ENCODE measurements at regions of chr1 and their contacts with region 1.

Region 1: DNA sequence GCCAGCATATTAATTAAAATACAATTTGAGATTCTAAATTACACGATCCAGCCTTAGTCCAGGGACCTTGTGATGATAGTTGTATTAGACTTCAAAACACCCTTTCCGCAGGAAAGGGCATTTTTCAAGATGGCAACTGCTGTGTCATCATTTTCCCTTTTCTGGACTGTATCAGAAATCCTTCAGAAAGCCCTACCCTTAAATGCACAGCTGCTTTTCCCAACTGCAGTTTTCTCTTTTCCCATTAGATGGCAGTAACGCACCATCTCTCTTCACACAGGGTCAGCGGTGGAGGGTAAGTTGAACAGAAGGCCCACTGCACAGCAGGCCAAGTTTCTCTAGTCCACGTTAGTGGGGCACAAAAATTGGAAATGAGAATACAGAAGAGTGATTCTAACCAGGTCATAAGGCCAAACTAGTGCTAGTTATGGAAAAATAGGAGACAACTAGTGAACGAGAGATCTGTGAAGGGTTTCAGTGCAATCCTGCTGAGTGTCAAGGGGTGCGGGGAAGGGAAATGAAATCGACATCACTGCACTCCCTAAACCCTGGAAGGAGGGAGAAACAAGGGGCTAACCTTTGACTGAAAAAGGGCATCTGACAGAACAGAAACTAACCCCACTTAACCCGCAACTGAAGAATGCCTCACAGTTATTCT is 22.1 kb upstream of the TDRD10 start:
- DNase-seq: peak; percentile 66
- H3K4me3 Mint-ChIP-seq: no peak overlapping the region
- H3K27ac Mint-ChIP-seq: no peak overlapping the region
- H3K4me1 Mint-ChIP-seq: peaks cover 17% of the 10 kb centered on the region
- H3K27me3 Mint-ChIP-seq: peaks cover 23% of the 10 kb centered on the region

Region 2: DNA sequence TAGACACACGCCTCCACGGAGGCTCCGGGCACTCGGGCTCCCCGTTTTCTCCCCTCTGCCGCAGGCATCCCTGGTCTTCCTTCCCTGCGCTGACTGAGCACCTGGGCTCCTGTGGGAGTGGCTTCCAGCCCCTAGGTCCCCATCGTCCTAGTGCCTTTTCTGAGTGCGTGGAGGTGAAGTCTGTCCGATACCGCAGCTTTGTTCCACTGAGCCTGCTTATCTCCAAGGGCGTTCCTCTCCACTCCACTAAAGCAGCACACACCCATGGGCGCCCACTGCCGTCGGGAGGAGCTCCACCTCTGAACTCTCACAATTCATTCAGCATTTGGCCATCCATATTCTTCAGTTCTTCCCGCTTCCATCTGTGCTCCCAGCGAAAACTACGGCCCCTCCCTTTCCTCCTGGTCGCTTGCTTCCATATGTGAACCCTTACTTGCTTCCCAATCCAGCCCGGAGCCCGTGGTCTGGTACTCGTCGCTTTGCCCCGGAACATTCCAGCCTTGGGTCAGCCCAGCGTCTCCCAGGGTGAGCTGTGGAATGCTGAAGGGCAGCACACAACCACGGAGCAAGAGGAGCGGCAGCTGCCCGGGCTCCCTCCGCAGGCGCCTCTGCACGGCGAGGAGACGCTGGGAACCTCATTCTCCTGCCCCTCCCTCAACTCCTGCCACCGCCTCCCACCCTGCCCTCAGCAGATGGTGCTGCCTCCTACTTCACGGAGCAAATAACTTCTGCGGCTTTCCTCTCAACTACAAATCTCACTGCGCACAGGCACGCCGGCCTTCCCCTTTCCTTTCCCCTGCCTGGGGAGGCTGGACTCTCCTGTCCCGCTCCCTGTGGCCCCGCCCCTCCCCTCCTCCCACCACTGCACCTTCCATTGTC is 127.1 kb before region 1 on chr1:
- CTCF ChIA-PET with region 1: interaction called, 13 read pairs
- DNase-seq: peak; percentile 70
- H3K4me3 Mint-ChIP-seq: peak overlapping the region; percentile 60
- H3K27ac Mint-ChIP-seq: peak overlapping the region; percentile 83
- H3K4me1 Mint-ChIP-seq: peaks cover 42% of the 10 kb centered on the region
- H3K27me3 Mint-ChIP-seq: peaks cover 17% of the 10 kb centered on the region

Region 3: DNA sequence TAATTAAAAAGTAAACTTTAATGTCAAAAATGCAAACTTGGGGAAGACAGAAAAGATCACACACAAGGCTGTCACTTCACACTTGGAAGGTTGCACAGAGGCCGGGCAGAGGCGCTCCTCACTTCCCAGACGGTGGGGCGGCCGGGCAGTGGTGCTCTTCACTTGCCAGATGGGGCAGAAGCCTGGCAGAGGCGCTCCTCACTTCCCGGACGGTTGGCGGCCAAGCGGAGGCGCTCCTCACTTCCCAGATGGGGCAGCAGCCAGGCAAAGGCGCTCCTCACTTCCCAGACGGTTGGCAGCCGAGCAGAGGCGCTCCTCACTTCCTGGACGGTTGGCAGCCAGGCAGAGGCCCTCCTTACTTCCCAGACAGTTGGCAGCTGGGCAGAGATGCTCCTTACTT is 100.6 kb before region 1 on chr1:
- CTCF ChIA-PET with region 1: no interaction called
- DNase-seq: no peak
- H3K4me3 Mint-ChIP-seq: no peak overlapping the region
- H3K27ac Mint-ChIP-seq: no peak overlapping the region
- H3K4me1 Mint-ChIP-seq: peaks cover 5% of the 10 kb centered on the region
- H3K27me3 Mint-ChIP-seq: peaks cover 9% of the 10 kb centered on the region

Region 4: DNA sequence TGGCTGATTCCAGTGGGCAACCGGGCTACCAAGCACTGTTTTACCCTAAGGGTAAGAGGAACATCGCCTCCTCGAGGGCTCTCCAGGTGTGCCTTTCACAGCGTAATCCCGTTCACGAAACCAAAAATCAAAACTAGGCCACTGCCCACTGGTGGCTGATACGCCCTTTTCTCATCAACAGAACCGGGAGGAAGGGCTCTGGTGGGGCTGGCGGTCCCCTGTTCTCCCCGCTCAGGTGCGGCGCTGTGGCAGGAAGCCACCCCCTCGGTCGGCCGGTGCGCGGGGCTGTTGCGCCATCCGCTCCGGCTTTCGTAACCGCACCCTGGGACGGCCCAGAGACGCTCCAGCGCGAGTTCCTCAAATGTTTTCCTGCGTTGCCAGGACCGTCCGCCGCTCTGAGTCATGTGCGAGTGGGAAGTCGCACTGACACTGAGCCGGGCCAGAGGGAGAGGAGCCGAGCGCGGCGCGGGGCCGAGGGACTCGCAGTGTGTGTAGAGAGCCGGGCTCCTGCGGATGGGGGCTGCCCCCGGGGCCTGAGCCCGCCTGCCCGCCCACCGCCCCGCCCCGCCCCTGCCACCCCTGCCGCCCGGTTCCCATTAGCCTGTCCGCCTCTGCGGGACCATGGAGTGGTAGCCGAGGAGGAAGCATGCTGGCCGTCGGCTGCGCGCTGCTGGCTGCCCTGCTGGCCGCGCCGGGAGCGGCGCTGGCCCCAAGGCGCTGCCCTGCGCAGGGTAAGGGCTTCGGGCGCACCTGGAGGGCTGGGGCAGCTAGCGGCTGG is 74.7 kb before region 1 on chr1 and contains the start of gene IL6R:
- CTCF ChIA-PET with region 1: interaction called, 14 read pairs
- DNase-seq: peak; percentile 81
- H3K4me3 Mint-ChIP-seq: peak within 1 kb of the TSS; percentile 84
- H3K27ac Mint-ChIP-seq: peak within 1 kb of the TSS; percentile 88
- H3K4me1 Mint-ChIP-seq: peaks cover 91% of the 10 kb centered on the region
- H3K27me3 Mint-ChIP-seq: peaks cover 18% of the 10 kb centered on the region

Region 5: GRCh38 chr1:154520333-154520732 is 40.4 kb after region 1 on chr1:
- CTCF ChIA-PET with region 1: interaction called, 10 read pairs
- DNase-seq: no peak
- H3K4me3 Mint-ChIP-seq: no peak overlapping the region
- H3K27ac Mint-ChIP-seq: no peak overlapping the region
- H3K4me1 Mint-ChIP-seq: no peaks in the 10 kb centered on the region
- H3K27me3 Mint-ChIP-seq: peaks cover 59% of the 10 kb centered on the region

Region 6: GRCh38 chr1:154546264-154547063 is 66.6 kb after region 1 on chr1:
- CTCF ChIA-PET with region 1: interaction called, 128 read pairs
- DNase-seq: peak; percentile 73
- H3K4me3 Mint-ChIP-seq: no peak overlapping the region
- H3K27ac Mint-ChIP-seq: no peak overlapping the region
- H3K4me1 Mint-ChIP-seq: peaks cover 15% of the 10 kb centered on the region
- H3K27me3 Mint-ChIP-seq: peaks cover 19% of the 10 kb centered on the region

Region 7: GRCh38 chr1:154689070-154689469 is 209.2 kb after region 1 on chr1:
- CTCF ChIA-PET with region 1: no interaction called
- DNase-seq: no peak
- H3K4me3 Mint-ChIP-seq: no peak overlapping the region
- H3K27ac Mint-ChIP-seq: no peak overlapping the region
- H3K4me1 Mint-ChIP-seq: no peaks in the 10 kb centered on the region
- H3K27me3 Mint-ChIP-seq: peaks cover 34% of the 10 kb centered on the region

Measured in activated naive CD4-positive, alpha-beta T cell treated with anti-CD3 and anti-CD28 coated beads, Interleukin-2, amount 10 ng/mL, durations not matched to agents 7 days and 5 days (primary cell).